Activated CD8-positive, alpha-beta T cell treated with anti-CD3 and anti-CD28 coated beads, Interleukin-2, amount 10 ng/mL, durations not matched to agents 7 days and 5 days (primary cell): ENCODE measurements at regions of chr1 and their contacts with region 1.

Region 1: GRCh38 chr1:235504496-235505222 is 407 bp upstream of the B3GALNT2 start:
- DNase-seq: peak; percentile 99
- ATAC-seq: peak; percentile 86
- H3K4me3 Mint-ChIP-seq: peak overlapping the region; percentile 90
- H3K27ac Mint-ChIP-seq: peak overlapping the region; percentile 97
- H3K4me1 Mint-ChIP-seq: peaks cover 19% of the 10 kb centered on the region
- H3K27me3 Mint-ChIP-seq: peaks cover 3% of the 10 kb centered on the region

Region 2: GRCh38 chr1:235328357-235329138 is 176.1 kb before region 1 on chr1 and contains the start of gene GGPS1:
- CTCF ChIA-PET with region 1: no interaction called
- POLR2A ChIA-PET with region 1: no interaction called
- DNase-seq: peak; percentile 99
- ATAC-seq: peak; percentile 84
- H3K4me3 Mint-ChIP-seq: no peak within 1 kb of the TSS
- H3K27ac Mint-ChIP-seq: no peak within 1 kb of the TSS
- H3K4me1 Mint-ChIP-seq: peaks cover 25% of the 10 kb centered on the region
- H3K27me3 Mint-ChIP-seq: no peaks in the 10 kb centered on the region
- total RNA-seq, gene GGPS1: 24.5 to 25.9 TPM

Region 3: DNA sequence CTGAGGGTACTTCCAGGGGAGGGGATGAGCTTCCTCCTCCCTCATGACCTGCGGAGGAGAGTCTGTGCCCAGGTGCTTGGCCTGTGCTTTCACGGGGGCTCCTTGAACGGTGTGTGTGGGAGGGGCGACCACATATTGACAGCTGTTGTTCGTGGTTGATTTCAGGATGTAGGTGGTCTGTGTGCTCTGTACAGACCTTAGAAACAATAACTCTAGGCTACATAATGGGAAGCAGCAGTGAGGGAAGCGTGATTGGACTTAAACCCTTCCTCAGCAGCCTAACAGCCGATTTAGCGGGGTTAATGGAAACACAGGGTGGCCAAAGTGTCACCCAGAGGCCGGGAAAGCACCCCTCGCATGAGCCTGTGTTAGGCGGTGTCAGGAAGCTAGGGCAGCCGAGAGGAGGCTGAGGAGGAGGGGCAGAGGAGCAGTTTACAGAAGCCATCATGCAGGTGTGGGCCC is 81.4 kb before region 1 on chr1:
- CTCF ChIA-PET with region 1: interaction called, 12 read pairs
- POLR2A ChIA-PET with region 1: no interaction called
- DNase-seq: peak; percentile 61
- ATAC-seq: peak; percentile 85
- H3K4me3 Mint-ChIP-seq: peak overlapping the region; percentile 50
- H3K27ac Mint-ChIP-seq: peak overlapping the region; percentile 66
- H3K4me1 Mint-ChIP-seq: peaks cover 27% of the 10 kb centered on the region
- H3K27me3 Mint-ChIP-seq: no peaks in the 10 kb centered on the region

Region 4: GRCh38 chr1:235533476-235534168 is 29.0 kb after region 1 on chr1:
- CTCF ChIA-PET with region 1: no interaction called
- POLR2A ChIA-PET with region 1: no interaction called
- DNase-seq: no peak
- ATAC-seq: no peak
- H3K4me3 Mint-ChIP-seq: no peak overlapping the region
- H3K27ac Mint-ChIP-seq: no peak overlapping the region
- H3K4me1 Mint-ChIP-seq: no peaks in the 10 kb centered on the region
- H3K27me3 Mint-ChIP-seq: no peaks in the 10 kb centered on the region